ENCODE measurements at regions of chr11 and their contacts with region 1.

Region 1: GRCh38 chr11:62816557-62816956 is 11.3 kb upstream of the NXF1 start:
- H3K4me3 Mint-ChIP-seq: peak overlapping the region; percentile 66
- H3K27ac Mint-ChIP-seq: peak overlapping the region; percentile 93
- H3K4me1 Mint-ChIP-seq: peaks cover 25% of the 10 kb centered on the region
- H3K27me3 Mint-ChIP-seq: no peaks in the 10 kb centered on the region

Region 2: GRCh38 chr11:62061351-62062222 is 755.0 kb before region 1 on chr11:
- intact Hi-C with region 1: no loop called
- H3K4me3 Mint-ChIP-seq: no peak overlapping the region
- H3K27ac Mint-ChIP-seq: no peak overlapping the region
- H3K4me1 Mint-ChIP-seq: no peaks in the 10 kb centered on the region
- H3K27me3 Mint-ChIP-seq: peaks cover 12% of the 10 kb centered on the region

Region 3: GRCh38 chr11:62573592-62574362 is 242.8 kb before region 1 on chr11 and contains the start of gene EEF1G:
- intact Hi-C with region 1: no loop called
- H3K4me3 Mint-ChIP-seq: peak within 1 kb of the TSS; percentile 98
- H3K27ac Mint-ChIP-seq: peak within 1 kb of the TSS; percentile 96
- H3K4me1 Mint-ChIP-seq: peaks cover 49% of the 10 kb centered on the region
- H3K27me3 Mint-ChIP-seq: no peaks in the 10 kb centered on the region

Region 4: GRCh38 chr11:62831520-62832335 is 15.2 kb after region 1 on chr11 and contains the start of gene STX5:
- intact Hi-C with region 1: loop called (anchors 2 kb)
- H3K4me3 Mint-ChIP-seq: peak within 1 kb of the TSS; percentile 95
- H3K27ac Mint-ChIP-seq: peak within 1 kb of the TSS; percentile 94
- H3K4me1 Mint-ChIP-seq: peaks cover 53% of the 10 kb centered on the region
- H3K27me3 Mint-ChIP-seq: no peaks in the 10 kb centered on the region

Measured in dendritic cell treated with granulocyte-macrophage colony-stimulating factor and Interleukin-4, amounts not matched to agents 40 ng/mL and 50 ng/mL, for 4 days (primary cell).